ENCODE measurements at regions of chr3 and their contacts with region 1.

Region 1: GRCh38 chr3:127953091-127954035 is 38.3 kb downstream of the KBTBD12 start:
- DNase-seq: no peak
- H3K4me3 ChIP-seq: no peak overlapping the region
- H3K27ac ChIP-seq: peak overlapping the region; percentile 58 to 66
- H3K4me1 ChIP-seq: peaks cover 0 to 20% of the 10 kb centered on the region in 2 donors
- H3K27me3 ChIP-seq: no peaks in the 10 kb centered on the region
- CTCF ChIP-seq: no peak

Region 2: GRCh38 chr3:127628788-127629466 is 324.4 kb before region 1 on chr3 and contains the start of gene PODXL2:
- intact Hi-C with region 1: no loop called
- DNase-seq: no peak
- H3K4me3 ChIP-seq: peak within 1 kb of the TSS; percentile 64 to 67
- H3K27ac ChIP-seq: no peak within 1 kb of the TSS
- H3K4me1 ChIP-seq: peaks cover 8 to 10% of the 10 kb centered on the region in 2 donors
- H3K27me3 ChIP-seq: no peaks in the 10 kb centered on the region
- CTCF ChIP-seq: no peak
- total RNA-seq, gene PODXL2: 1.6 TPM

Region 3: DNA sequence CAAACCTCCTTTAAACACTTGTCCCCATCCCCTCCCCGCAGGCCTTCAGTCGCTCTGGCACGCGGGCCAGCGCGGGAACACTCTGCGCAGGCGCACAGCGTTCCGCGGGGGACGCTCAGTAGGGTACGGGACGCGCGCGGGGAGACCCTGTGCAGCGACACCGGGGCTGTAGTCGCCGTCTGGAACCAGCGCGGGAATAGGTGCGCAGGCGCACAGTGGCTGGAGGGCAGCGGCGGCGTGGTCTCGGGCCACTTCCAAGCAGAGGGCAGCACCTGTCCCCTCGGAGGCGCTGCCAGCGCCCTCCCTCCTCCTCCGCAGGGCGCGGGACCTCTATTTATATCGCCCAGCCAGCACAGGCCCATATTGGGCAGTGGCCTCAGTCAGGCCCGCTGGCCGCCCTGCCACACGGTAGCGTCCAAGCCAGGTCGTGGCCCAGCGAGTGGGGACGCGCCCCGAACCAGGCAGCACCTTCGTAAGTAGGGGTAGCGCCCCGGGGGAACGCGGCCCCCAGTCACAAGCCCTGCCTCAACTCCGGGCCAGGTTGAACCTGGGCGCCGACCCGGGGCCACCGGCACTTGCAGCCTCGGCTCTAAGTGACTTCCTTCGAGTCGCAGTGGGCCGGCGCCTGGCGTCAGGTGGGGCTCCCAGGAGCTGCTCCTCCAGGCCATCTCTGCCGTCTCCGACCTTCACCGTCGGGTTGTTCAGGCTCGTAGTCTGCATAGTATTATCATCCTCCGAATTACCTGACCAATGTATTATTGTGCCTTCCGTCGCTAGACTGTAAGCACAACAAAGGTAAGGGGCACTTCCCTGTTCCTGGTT is 38.0 kb before region 1 on chr3 and contains the start of gene KBTBD12:
- intact Hi-C with region 1: loop called (anchors 1 kb)
- DNase-seq: peak in 1 of 2 donors; percentile 73
- H3K4me3 ChIP-seq: peak within 1 kb of the TSS; percentile 66 to 84
- H3K27ac ChIP-seq: peak within 1 kb of the TSS; percentile 79 to 86
- H3K4me1 ChIP-seq: peaks cover 0 to 14% of the 10 kb centered on the region in 2 donors
- H3K27me3 ChIP-seq: no peaks in the 10 kb centered on the region
- CTCF ChIP-seq: peak in 1 of 3 experiments; percentile 9
- total RNA-seq, gene KBTBD12: 3.5 TPM

Region 4: GRCh38 chr3:128217702-128218547 is 264.6 kb after region 1 on chr3:
- intact Hi-C with region 1: no loop called
- DNase-seq: no peak
- H3K4me3 ChIP-seq: no peak overlapping the region
- H3K27ac ChIP-seq: no peak overlapping the region
- H3K4me1 ChIP-seq: no peaks in the 10 kb centered on the region
- H3K27me3 ChIP-seq: no peaks in the 10 kb centered on the region
- CTCF ChIP-seq: no peak

Measured in ascending aorta (tissue), 2 donors.